ENCODE measurements at regions of chr1 and their contacts with region 1.

Region 1: GRCh38 chr1:82503822-82504221 is 703.1 kb downstream of the ADGRL2 start:
- DNase-seq: no peak

Region 2: GRCh38 chr1:82464362-82465001 is 39.3 kb before region 1 on chr1:
- in situ Hi-C with region 1: loop called (anchors 5 kb)
- DNase-seq: no peak

Region 3: DNA sequence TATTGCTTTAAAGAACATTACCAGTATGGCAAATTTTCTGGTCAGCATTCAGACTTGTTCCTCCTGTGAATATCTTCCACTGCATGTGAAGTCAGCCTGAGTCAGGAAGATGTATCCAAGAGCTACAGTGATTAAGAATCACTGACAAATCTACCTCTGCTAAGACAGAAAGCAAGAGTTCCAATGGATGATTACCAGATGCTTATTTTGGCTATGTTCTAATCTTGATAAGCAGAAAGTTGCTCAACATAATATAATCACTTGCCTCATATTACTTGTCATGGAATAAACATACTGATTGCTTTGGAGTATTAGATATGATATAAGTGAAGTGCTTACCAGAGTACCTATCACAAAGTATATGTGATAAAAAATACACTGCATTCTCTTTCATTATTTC is 35.1 kb after region 1 on chr1:
- in situ Hi-C with region 1: no loop called
- DNase-seq: no peak

Measured in G401 (cell line).